ENCODE measurements at regions of chr5 and their contacts with region 1.

Region 1: GRCh38 chr5:141636413-141637122 is at the starts of genes HDAC3 and RELL2:
- DNase-seq: peak; percentile 93 to 98
- H3K4me3 ChIP-seq: peak within 1 kb of the TSS; percentile 85
- H3K4me3 Mint-ChIP-seq: peak within 1 kb of the TSS; percentile 90
- H3K27ac Mint-ChIP-seq: peak within 1 kb of the TSS; percentile 72
- H3K4me1 ChIP-seq: peaks cover 10% of the 10 kb centered on the region; the same call in 1 of the 2 replicates
- H3K4me1 Mint-ChIP-seq: peaks cover 9% of the 10 kb centered on the region
- H3K27me3 ChIP-seq: no peaks in the 10 kb centered on the region
- H3K27me3 Mint-ChIP-seq: no peaks in the 10 kb centered on the region
- CTCF ChIP-seq: no peak
- total RNA-seq, gene HDAC3: 73.0 and 74.5 TPM in 2 replicates
- total RNA-seq, gene RELL2: 8.7 and 13.6 TPM in 2 replicates

Region 2: GRCh38 chr5:141650851-141651727 is 14.5 kb after region 1 on chr5 and contains the start of gene FCHSD1:
- CTCF ChIA-PET with region 1: interaction called, 7 read pairs
- POLR2A ChIA-PET with region 1: interaction called, 19 read pairs
- intact Hi-C with region 1: loop called (anchors 1 kb)
- DNase-seq: peak; percentile 90 to 93
- H3K4me3 ChIP-seq: peak within 1 kb of the TSS; percentile 75
- H3K4me3 Mint-ChIP-seq: peak within 1 kb of the TSS; percentile 92
- H3K27ac Mint-ChIP-seq: peak within 1 kb of the TSS; percentile 77
- H3K4me1 ChIP-seq: peaks cover 5% of the 10 kb centered on the region
- H3K4me1 Mint-ChIP-seq: peaks cover 22% of the 10 kb centered on the region
- H3K27me3 ChIP-seq: no peaks in the 10 kb centered on the region
- H3K27me3 Mint-ChIP-seq: no peaks in the 10 kb centered on the region
- CTCF ChIP-seq: no peak
- total RNA-seq, gene FCHSD1: 25.0 and 26.8 TPM in 2 replicates

Region 3: DNA sequence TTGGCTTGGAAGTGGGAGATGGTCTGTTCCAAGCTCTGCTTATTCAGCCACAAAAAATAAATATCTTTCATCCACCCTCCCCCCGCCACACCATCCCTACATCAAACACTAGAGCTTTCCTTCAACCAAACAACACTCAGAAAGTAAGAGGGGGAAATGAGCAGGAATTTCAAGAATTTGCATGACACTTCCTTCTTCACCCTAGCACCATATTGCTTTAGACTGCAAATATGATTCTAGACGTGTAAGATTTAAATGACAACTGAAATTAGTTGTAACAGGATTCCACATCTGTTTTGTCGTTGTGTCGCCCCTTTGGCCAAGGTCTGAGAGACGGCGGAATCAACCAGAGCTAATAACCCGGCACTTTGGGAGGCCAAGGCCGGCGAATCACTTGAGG is 560.5 kb after region 1 on chr5:
- CTCF ChIA-PET with region 1: no interaction called
- POLR2A ChIA-PET with region 1: no interaction called
- intact Hi-C with region 1: loop called (anchors 5 kb)
- DNase-seq: no peak
- H3K4me3 ChIP-seq: no peak overlapping the region
- H3K4me3 Mint-ChIP-seq: no peak overlapping the region
- H3K27ac Mint-ChIP-seq: no peak overlapping the region
- H3K4me1 ChIP-seq: peaks cover 8% of the 10 kb centered on the region
- H3K4me1 Mint-ChIP-seq: no peaks in the 10 kb centered on the region
- H3K27me3 ChIP-seq: no peaks in the 10 kb centered on the region
- H3K27me3 Mint-ChIP-seq: no peaks in the 10 kb centered on the region
- CTCF ChIP-seq: no peak

Measured in Caco-2 (cell line).